Posterior vena cava (tissue), 2 donors: ENCODE measurements at regions of chr2 and their contacts with region 1.

Region 1: DNA sequence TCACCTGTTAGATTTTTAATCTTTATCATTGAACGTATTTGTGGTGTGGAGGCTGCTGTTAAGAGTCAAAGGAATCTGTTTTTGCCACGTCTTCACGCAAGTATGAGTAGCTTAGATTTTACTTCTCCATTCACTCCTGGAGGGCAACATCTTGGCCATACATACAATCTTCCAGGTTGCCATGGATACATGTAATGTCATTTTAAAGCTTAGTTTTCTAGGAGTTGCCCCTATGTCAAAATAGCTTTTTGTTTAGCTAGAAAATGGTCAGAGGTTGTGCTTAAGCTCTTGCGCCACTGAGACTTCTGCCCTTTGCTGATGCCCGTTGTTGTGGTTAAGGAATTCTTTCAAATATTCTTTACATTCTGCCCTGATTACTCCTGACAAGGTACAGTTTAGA is 245.3 kb upstream of the TFPI start:
- DNase-seq: no peak

Region 2: GRCh38 chr2:187774551-187775071 is 25.0 kb before region 1 on chr2:
- intact Hi-C with region 1: no loop called
- DNase-seq: no peak

Region 3: DNA sequence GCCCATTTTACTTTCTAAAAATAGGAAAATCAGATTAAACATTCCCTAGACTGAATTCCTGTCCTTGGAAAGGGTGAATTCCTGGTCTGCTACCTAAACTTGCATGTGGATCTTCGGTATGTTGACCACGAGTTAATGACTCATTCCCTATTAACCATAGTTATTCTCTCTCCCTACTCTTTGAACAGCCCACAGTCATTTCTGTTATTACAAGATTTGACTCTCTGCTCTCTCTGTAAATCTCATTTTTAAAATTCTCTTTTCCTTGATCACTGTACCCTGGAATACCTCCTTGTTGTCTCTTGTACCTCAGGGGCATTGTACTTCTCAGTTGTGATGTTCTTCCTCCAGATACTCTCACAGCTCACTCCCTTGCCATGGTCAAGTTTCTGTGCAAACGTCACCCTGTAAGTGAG is 400.2 kb after region 1 on chr2:
- intact Hi-C with region 1: loop called in 1 of 2 experiments (anchors 5 kb)
- DNase-seq: no peak